Activated CD8-positive, alpha-beta memory T cell treated with anti-CD3 and anti-CD28 coated beads, Interleukin-2, amount 10 ng/mL, durations not matched to agents 7 days and 5 days (primary cell): ENCODE measurements at regions of chr4 and their contacts with region 1.

Region 1: GRCh38 chr4:185134307-185134869 is 8.7 kb upstream of the SLC25A4 start:
- DNase-seq: no peak
- ATAC-seq: peak; percentile 66
- H3K4me3 Mint-ChIP-seq: no peak overlapping the region
- H3K27ac Mint-ChIP-seq: no peak overlapping the region
- H3K4me1 Mint-ChIP-seq: no peaks in the 10 kb centered on the region
- H3K27me3 Mint-ChIP-seq: peaks cover 27% of the 10 kb centered on the region

Region 2: DNA sequence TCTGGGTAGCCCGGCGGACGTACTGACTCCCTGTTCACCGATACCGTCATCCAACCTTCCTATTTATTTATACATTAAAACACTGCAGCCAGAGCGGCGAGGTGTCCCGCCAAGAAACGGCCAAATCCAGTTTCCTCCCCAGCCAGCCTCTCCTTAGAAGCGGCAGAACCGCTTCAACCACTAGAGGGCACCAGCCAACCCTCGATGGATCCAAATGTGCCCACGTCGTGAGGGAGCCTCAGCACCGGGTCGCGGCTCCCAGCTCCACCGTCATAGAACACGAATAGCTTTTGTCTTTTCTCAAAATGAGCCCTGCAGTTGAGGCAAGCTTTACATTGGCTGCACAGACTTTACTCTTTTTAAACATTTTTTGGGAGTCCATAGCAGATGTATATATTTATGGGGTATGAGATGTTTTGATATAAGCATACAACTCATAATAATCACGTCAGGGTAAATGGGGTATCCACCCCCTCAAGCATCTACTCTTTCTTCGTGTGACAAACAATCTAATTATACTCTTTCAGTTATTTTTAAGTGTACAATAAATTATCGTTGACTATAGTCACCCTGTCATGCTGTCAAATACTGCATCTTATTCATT is 129.1 kb before region 1 on chr4:
- CTCF ChIA-PET with region 1: interaction called, 13 read pairs
- DNase-seq: peak; percentile 85
- ATAC-seq: peak; percentile 94
- H3K4me3 Mint-ChIP-seq: no peak overlapping the region
- H3K27ac Mint-ChIP-seq: no peak overlapping the region
- H3K4me1 Mint-ChIP-seq: peaks cover 6% of the 10 kb centered on the region
- H3K27me3 Mint-ChIP-seq: peaks cover 54% of the 10 kb centered on the region

Region 3: DNA sequence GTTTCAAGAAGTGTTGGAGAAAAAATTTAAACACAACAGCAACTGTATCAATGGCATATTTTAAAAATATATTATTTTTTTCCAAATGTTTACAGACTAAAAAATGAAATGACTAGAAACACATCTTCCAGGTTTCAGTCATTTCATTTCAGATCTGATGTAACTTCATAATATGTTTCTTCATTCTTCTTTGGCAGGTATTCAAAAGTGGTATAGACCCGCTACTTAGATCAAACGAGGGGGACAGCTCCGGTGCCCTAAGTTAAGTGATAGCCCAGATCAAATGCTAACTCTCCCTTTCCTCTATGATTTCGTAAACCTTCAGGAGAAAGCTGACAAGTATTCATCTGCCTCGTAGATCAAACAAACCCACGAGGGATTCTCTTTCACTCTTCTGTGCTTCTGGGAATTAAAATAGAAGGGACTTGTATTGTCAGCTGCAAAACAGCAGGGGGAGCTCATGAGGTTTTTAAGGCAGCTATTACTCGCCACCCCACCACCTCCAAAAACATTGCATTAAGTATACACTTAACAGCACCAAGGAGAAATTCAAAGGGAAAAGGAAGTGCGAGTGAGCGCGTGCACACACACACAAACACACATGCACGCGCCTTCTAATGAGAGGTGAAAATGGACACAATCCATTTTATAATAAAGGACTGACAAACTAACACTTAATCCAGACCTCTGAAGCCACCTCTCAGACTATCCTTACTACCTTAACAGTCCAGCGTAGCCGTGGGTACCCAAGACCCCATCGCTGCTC is 94.7 kb before region 1 on chr4:
- CTCF ChIA-PET with region 1: interaction called, 53 read pairs
- DNase-seq: peak; percentile 62
- ATAC-seq: peak; percentile 80
- H3K4me3 Mint-ChIP-seq: peak overlapping the region; percentile 40
- H3K27ac Mint-ChIP-seq: no peak overlapping the region
- H3K4me1 Mint-ChIP-seq: peaks cover 6% of the 10 kb centered on the region
- H3K27me3 Mint-ChIP-seq: peaks cover 36% of the 10 kb centered on the region

Region 4: DNA sequence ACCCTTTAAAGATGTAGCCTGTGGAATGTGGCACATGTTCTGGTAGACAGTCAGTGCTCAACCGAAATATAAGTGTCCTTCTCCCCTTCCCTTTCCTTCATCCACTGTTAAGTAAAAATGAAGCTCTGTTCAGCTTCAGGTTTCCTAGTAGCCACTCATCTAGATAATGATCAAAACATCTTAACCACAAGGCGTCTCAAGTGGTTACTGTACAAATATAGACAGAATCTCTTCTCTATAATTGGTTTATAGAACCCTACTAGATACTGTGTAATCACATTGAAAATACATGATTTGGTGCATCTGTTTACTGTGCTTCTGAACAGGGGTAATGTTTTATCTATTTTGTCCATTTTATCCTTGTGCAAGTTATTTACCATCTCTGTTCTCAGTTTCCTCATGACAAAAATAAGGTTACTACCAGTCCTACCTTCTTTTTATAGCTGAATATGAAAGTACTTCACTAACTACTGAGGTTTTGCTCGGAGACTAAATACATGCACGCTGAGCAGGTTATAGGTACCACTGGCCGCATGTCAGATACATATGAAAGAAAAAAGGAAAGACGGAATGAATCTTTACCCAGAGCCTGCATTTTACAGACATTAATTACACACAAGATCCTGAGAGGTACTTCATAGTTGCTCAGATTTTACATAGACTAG is 11.6 kb before region 1 on chr4:
- CTCF ChIA-PET with region 1: interaction called, 16 read pairs
- DNase-seq: no peak
- ATAC-seq: no peak
- H3K4me3 Mint-ChIP-seq: no peak overlapping the region
- H3K27ac Mint-ChIP-seq: no peak overlapping the region
- H3K4me1 Mint-ChIP-seq: peaks cover 9% of the 10 kb centered on the region
- H3K27me3 Mint-ChIP-seq: peaks cover 55% of the 10 kb centered on the region

Region 5: GRCh38 chr4:185192059-185192458 is 57.7 kb after region 1 on chr4:
- CTCF ChIA-PET with region 1: no interaction called
- DNase-seq: no peak
- ATAC-seq: peak; percentile 20
- H3K4me3 Mint-ChIP-seq: no peak overlapping the region
- H3K27ac Mint-ChIP-seq: no peak overlapping the region
- H3K4me1 Mint-ChIP-seq: peaks cover 29% of the 10 kb centered on the region
- H3K27me3 Mint-ChIP-seq: no peaks in the 10 kb centered on the region